Head of caudate nucleus (tissue), 42 donors: ENCODE measurements at regions of chr10 and their contacts with region 1.

Region 1: DNA sequence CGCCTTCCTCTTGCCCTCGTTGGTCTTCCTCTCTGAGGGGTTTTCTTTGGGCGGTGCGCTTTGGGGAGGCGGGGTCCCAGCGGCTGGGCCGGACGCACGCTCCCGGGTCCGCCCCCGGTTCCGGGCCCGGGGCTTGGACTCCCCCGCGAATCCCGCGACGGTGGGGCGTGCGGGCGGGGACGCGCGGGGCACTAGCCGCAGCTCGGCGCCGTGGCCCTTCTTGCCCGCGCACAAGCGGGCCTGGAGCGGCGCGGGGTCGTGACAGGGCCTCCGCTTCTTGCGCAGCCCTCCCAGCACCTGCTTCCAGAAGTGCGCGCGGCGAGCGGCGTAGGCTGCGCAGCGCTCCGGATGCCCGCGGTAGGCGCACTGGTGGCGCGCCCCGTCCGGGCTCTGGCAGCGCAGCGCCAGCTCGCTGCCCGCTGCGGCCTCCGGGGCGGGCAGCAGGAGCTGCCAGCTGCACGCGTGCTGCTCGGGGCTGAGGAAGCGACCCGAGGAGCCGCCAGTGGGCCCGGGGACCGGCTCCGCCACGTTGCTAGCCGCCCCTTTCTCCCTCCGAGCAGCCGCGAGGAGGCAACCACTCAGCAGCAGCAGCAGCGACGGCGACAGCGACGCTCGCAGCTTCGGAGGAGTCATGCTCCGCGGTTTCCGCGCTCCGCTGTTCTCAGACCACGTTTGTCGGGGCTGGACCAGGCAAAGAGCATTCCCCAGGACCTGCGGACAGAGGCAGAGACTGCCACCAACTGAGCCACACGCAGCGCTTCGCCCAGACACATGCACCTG is 759 bp downstream of the FGFBP3 start:
- DNase-seq: peak; percentile 53 to 92 (median 80)

Region 2: GRCh38 chr10:91758303-91759146 is 150.0 kb before region 1 on chr10:
- intact Hi-C with region 1: loop called (anchors 2 kb)
- DNase-seq: peak in 1 of 42 donors; percentile 13

Region 3: GRCh38 chr10:91797874-91798648 is 110.5 kb before region 1 on chr10 and contains the start of gene TNKS2:
- intact Hi-C with region 1: loop called (anchors 5 kb)
- DNase-seq: peak; percentile 68 to 96 (median 91)